ENCODE measurements at regions of chr20 and their contacts with region 1.

Region 1: DNA sequence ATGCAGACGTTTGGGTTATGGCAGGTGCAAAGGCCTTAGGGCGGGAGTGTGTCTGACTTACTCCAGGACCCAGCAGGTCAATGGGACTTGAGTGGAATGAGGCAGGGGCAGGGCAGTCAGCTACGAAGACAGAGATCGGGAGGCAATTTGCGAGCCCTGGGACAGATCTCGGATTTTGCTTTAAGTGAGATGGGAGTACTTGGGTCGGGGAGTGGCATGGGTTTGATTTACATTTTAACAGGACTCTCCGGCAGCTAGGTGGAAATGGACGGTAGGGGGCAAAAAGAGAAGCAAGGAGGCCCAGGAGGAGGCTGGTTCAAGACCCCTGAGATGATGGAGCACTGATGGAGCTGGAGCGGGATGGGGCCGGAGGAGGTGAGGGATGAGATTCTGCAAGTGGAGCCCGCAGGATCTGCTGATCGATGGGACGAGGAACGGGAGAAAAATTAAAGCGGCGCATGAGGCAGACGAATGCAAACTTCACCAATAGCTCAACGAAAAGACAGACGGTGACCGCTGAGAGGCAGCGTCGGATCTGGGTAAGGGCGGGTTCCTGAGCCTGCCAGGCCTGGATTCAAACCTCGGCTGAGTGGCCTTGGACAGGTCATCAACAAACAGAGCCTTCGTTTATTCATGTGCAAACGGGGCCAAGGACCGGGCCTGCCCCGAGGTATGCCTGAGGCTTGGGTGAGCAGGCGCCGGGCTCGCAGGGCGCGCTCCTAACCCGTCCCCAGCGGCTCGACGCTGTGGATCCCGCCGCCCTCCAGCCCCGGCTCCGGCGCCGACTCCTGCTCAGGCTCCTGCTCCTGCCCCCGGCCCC is 756 bp upstream of the RBCK1 start:
- DNase-seq: peak; percentile 76
- H3K4me3 Mint-ChIP-seq: peak overlapping the region; percentile 82
- H3K27ac Mint-ChIP-seq: peak overlapping the region; percentile 30
- H3K4me1 Mint-ChIP-seq: peaks cover 31% of the 10 kb centered on the region
- H3K27me3 Mint-ChIP-seq: no peaks in the 10 kb centered on the region
- CTCF ChIP-seq: peak; percentile 19

Region 2: DNA sequence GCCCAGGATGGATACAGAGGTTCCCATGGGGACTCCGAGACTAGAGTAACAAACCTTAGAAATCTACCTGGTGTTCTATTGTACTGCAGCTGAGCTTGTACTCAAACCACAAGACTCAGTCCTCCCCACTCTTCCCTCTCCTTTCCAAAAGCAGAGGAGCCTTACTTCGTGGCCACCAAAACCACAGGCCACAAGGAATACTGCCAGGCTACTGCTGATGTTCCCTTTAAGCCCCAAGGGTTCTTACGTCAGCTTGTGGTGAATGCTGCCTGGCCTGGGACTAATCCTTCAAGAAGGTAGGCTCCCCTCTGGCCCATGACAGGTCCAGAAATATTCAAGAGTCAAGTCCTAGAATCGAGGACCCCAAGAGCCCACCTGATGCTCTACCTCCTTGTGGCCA is 207.3 kb before region 1 on chr20:
- CTCF ChIA-PET with region 1: no interaction called
- POLR2A ChIA-PET with region 1: no interaction called
- intact Hi-C with region 1: no loop called
- DNase-seq: peak; percentile 3
- H3K4me3 Mint-ChIP-seq: no peak overlapping the region
- H3K27ac Mint-ChIP-seq: no peak overlapping the region
- H3K4me1 Mint-ChIP-seq: no peaks in the 10 kb centered on the region
- H3K27me3 Mint-ChIP-seq: peaks cover 56% of the 10 kb centered on the region
- CTCF ChIP-seq: no peak

Region 3: GRCh38 chr20:371755-372542 is 35.4 kb before region 1 on chr20:
- CTCF ChIA-PET with region 1: interaction called, 6 read pairs
- POLR2A ChIA-PET with region 1: interaction called, 197 read pairs
- intact Hi-C with region 1: no loop called
- DNase-seq: peak; percentile 100
- H3K4me3 Mint-ChIP-seq: peak overlapping the region; percentile 26
- H3K27ac Mint-ChIP-seq: peak overlapping the region; percentile 95
- H3K4me1 Mint-ChIP-seq: peaks cover 56% of the 10 kb centered on the region
- H3K27me3 Mint-ChIP-seq: no peaks in the 10 kb centered on the region
- CTCF ChIP-seq: no peak

Region 4: DNA sequence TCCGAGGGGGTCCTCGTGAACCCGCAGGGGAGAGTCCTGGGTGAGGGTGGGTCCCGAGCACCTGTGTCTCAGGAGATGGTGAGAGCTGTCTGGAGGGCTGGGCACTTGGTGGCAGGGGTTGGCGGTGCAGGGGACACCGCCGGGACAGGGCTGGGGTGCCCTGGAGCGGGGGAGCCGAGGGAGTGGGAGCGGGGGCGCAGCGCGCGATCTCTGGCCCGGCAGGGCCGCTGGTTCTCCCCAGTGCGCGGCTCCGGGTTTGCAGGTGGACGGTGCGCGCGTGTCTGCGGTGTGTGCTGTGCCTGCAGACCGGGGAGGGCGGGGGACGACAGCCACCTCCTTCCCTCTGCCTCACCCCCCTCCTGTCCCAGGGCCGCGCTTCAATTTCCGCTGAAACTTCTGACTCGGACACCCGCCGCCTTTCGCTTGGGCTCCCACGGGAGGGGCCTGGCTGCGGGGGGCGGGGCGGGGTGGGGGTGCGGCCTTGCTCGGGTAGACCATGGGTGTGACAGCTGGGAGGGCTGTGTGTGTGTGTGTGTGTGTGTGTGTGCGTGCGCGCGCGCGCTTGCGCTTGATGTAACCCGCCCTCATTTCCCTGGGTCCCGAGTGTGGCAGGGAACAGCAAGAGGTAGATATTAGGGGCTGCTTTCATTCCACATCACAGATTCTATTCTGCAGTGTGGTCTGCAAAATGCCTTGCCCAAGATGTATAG is 25.6 kb before region 1 on chr20:
- CTCF ChIA-PET with region 1: interaction called, 10 read pairs
- POLR2A ChIA-PET with region 1: interaction called, 198 read pairs
- intact Hi-C with region 1: no loop called
- DNase-seq: peak; percentile 81
- H3K4me3 Mint-ChIP-seq: peak overlapping the region; percentile 79
- H3K27ac Mint-ChIP-seq: no peak overlapping the region
- H3K4me1 Mint-ChIP-seq: peaks cover 25% of the 10 kb centered on the region
- H3K27me3 Mint-ChIP-seq: no peaks in the 10 kb centered on the region
- CTCF ChIP-seq: no peak

Region 5: GRCh38 chr20:513429-513828 is 106.1 kb after region 1 on chr20:
- CTCF ChIA-PET with region 1: no interaction called
- POLR2A ChIA-PET with region 1: no interaction called
- intact Hi-C with region 1: no loop called
- DNase-seq: no peak
- H3K4me3 Mint-ChIP-seq: no peak overlapping the region
- H3K27ac Mint-ChIP-seq: no peak overlapping the region
- H3K4me1 Mint-ChIP-seq: peaks cover 30% of the 10 kb centered on the region
- H3K27me3 Mint-ChIP-seq: no peaks in the 10 kb centered on the region
- CTCF ChIP-seq: no peak